Heart left ventricle (tissue), 16 donors: ENCODE measurements at regions of chr3 and their contacts with region 1.

Region 1: GRCh38 chr3:171459942-171460724 is at the start of gene TNIK:
- DNase-seq: peak; percentile 93 to 96 (median 94)
- ATAC-seq: peak; percentile 94 to 98 (median 96)
- H3K4me3 ChIP-seq: peak within 1 kb of the TSS; percentile 62 to 83 (median 76)
- H3K27ac ChIP-seq: peak within 1 kb of the TSS; percentile 59 to 92 (median 84)
- H3K4me1 ChIP-seq: peaks cover 0 to 56% (median 14%) of the 10 kb centered on the region in 12 donors
- H3K27me3 ChIP-seq: peaks cover 0 to 11% (median 0%) of the 10 kb centered on the region in 9 donors
- CTCF ChIP-seq: peak in 1 of 12 donors; percentile 19
- POLR2A ChIP-seq: peak in 1 of 2 donors; percentile 60
- total RNA-seq, gene TNIK: 12.3 to 51.6 (median 32.4) TPM

Region 2: GRCh38 chr3:171162986-171163723 is 297.0 kb before region 1 on chr3:
- intact Hi-C with region 1: loop called in 1 of 10 experiments (anchors 10 kb)
- DNase-seq: no peak
- ATAC-seq: no peak
- H3K4me3 ChIP-seq: no peak overlapping the region
- H3K27ac ChIP-seq: no peak overlapping the region
- H3K4me1 ChIP-seq: peaks cover 0 to 2% (median 0%) of the 10 kb centered on the region in 12 donors
- H3K27me3 ChIP-seq: no peaks in the 10 kb centered on the region
- CTCF ChIP-seq: peak in 11 of 12 donors; percentile 13 to 62 (median 37)
- POLR2A ChIP-seq: no peak

Region 3: GRCh38 chr3:171187706-171188290 is 272.3 kb before region 1 on chr3:
- intact Hi-C with region 1: loop called in 9 of 10 experiments (anchors 2 to 10 kb)
- DNase-seq: no peak
- ATAC-seq: peak; percentile 51 to 72 (median 64)
- H3K4me3 ChIP-seq: no peak overlapping the region
- H3K27ac ChIP-seq: no peak overlapping the region
- H3K4me1 ChIP-seq: peaks cover 0 to 42% (median 12%) of the 10 kb centered on the region in 12 donors
- H3K27me3 ChIP-seq: no peaks in the 10 kb centered on the region
- CTCF ChIP-seq: peak; percentile 39 to 72 (median 54)
- POLR2A ChIP-seq: no peak

Region 4: DNA sequence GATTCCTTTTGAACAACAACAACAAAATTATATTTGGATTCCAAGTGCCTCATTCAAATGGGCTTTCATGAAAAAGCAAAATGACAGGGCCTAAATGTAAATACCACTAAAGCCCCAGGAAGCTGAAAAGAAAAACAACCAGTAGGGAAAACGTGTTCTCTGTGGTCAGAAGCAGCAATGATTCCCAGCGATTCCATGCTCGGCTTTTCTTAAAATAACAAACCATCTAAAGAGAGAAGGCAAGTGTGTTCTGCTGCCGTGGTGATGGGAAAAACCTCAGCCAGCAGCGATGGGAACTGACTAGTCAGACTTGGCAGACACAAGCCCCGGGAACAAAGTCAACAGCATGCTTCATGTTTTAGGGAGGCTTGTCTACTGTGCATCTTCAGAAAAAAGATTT is 153.5 kb before region 1 on chr3:
- intact Hi-C with region 1: no loop called
- DNase-seq: peak; percentile 76 to 84 (median 79)
- ATAC-seq: peak; percentile 91 to 94 (median 93)
- H3K4me3 ChIP-seq: peak overlapping the region in 5 of 12 donors; percentile 6 to 32 (median 7)
- H3K27ac ChIP-seq: peak overlapping the region; percentile 54 to 85 (median 75)
- H3K4me1 ChIP-seq: peaks cover 0 to 34% (median 15%) of the 10 kb centered on the region in 12 donors
- H3K27me3 ChIP-seq: no peaks in the 10 kb centered on the region
- CTCF ChIP-seq: no peak
- POLR2A ChIP-seq: no peak

Region 5: GRCh38 chr3:171328419-171329082 is 131.6 kb before region 1 on chr3:
- intact Hi-C with region 1: loop called in 9 of 10 experiments (anchors 5 to 10 kb)
- DNase-seq: peak in 1 of 5 donors; percentile 38
- ATAC-seq: peak in 3 of 4 donors; percentile 27 to 47 (median 44)
- H3K4me3 ChIP-seq: no peak overlapping the region
- H3K27ac ChIP-seq: peak overlapping the region in 2 of 12 donors; percentile 3 to 36
- H3K4me1 ChIP-seq: peaks cover 0 to 69% (median 38%) of the 10 kb centered on the region in 12 donors
- H3K27me3 ChIP-seq: no peaks in the 10 kb centered on the region
- CTCF ChIP-seq: peak in 1 of 12 donors; percentile 9
- POLR2A ChIP-seq: no peak

Region 6: DNA sequence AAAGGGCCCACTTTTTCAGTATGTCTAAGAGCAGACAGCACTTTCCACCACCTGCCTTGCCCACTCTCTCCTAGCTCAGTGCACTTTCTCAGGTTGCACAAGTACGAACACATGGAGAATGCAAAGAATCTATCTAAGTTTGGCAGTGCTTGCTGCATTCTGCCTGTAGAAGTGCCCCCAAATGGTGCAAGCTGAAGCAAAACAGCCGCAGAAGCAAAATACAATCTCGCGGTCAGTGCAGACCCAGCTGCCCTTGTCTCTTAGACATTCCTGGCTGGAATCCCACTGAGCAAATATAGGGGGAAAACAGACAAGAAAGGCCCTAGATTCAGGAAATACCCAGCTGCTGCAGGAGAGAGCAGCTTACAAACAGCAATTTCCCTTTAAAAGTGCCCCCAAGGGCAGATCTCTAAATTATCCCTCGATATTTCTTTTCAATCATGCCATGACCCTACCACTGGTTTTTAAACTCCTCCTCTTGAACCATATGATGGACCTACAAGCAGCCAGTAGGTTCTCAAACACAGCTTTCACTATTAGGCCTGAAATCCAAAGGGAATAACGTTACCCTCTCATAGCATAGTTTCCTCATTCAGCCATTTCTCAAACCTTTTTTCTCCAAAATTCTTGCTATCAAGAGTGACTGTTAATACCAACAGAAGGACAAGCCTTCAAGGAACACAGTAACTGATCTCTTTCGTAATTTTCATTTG is 66.9 kb before region 1 on chr3:
- intact Hi-C with region 1: loop called in 3 of 10 experiments (anchors 5 to 10 kb)
- DNase-seq: no peak
- ATAC-seq: peak in 1 of 4 donors; percentile 37
- H3K4me3 ChIP-seq: peak overlapping the region in 1 of 12 donors; percentile 15
- H3K27ac ChIP-seq: peak overlapping the region in 9 of 12 donors; percentile 11 to 68 (median 32)
- H3K4me1 ChIP-seq: peaks cover 0 to 56% (median 26%) of the 10 kb centered on the region in 12 donors
- H3K27me3 ChIP-seq: no peaks in the 10 kb centered on the region
- CTCF ChIP-seq: no peak
- POLR2A ChIP-seq: no peak

Region 7: GRCh38 chr3:171506743-171507319 is 46.7 kb after region 1 on chr3:
- intact Hi-C with region 1: no loop called
- DNase-seq: no peak
- ATAC-seq: no peak
- H3K4me3 ChIP-seq: no peak overlapping the region
- H3K27ac ChIP-seq: no peak overlapping the region
- H3K4me1 ChIP-seq: no peaks in the 10 kb centered on the region
- H3K27me3 ChIP-seq: no peaks in the 10 kb centered on the region
- CTCF ChIP-seq: no peak
- POLR2A ChIP-seq: no peak

Region 8: GRCh38 chr3:171556148-171557145 is 96.3 kb after region 1 on chr3:
- intact Hi-C with region 1: loop called in 5 of 10 experiments (anchors 5 to 10 kb)
- DNase-seq: peak in 4 of 5 donors; percentile 21 to 66 (median 48)
- ATAC-seq: peak; percentile 70 to 94 (median 91)
- H3K4me3 ChIP-seq: no peak overlapping the region
- H3K27ac ChIP-seq: peak overlapping the region in 1 of 12 donors; percentile 31
- H3K4me1 ChIP-seq: peaks cover 0 to 19% (median 0%) of the 10 kb centered on the region in 12 donors
- H3K27me3 ChIP-seq: no peaks in the 10 kb centered on the region
- CTCF ChIP-seq: no peak
- POLR2A ChIP-seq: no peak